OCI-LY7 (cell line): ENCODE measurements at regions of chr7 and their contacts with region 1.

Region 1: DNA sequence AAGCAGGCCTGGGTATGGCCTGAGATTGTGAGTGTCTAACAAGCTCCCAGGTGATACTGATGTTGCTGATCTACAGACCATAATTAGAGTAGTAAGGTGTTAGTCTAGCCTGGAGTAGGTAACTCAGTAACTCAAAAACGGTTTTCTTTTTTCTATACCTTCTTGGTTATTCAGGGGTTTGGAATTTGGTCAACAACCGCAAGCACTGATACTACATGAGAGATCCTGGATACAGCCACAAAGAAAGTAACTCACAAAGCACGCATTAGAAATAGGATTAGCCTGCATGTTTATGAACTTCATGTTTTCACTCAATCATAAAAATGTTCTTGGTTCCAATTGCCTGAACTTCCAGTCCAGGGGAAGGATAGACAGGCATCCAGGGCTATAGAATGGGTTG is 803.5 kb downstream of the MAGI2 start:
- DNase-seq: no peak
- H3K4me3 ChIP-seq: no peak overlapping the region
- H3K27ac ChIP-seq: no peak overlapping the region
- H3K4me1 ChIP-seq: no peaks in the 10 kb centered on the region
- CTCF ChIP-seq: no peak

Region 2: DNA sequence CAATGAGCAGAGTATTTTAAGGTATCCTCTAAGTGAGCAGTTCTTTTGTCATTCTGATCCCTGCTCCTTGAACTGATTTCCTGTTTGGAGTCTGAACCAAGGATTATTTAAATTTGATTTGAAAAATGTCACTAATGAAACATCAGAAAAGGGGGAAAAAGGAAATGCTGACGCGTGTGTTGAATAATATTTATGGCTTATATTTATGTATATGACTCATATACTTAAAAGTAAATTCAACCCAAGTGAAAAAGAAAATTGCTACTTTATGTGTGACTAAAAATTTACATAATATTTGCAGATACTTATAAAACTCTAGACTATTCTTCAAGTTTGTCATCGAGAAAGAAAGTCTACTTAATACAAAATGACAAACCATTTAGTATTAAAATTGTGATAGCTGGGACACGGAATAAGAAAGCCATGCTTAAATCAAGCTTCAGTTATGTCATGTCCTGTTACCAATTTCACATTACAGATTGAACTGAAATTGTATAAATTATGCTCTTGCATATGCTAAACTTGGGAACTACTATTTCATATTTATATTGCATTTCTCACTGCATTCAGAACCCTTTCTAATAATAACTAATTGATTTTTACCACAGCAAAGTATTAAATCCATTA is 153.6 kb after region 1 on chr7:
- CTCF ChIA-PET with region 1: no interaction called
- POLR2A ChIA-PET with region 1: interaction called, 10 read pairs
- intact Hi-C with region 1: no loop called
- DNase-seq: no peak
- H3K4me3 ChIP-seq: no peak overlapping the region
- H3K27ac ChIP-seq: no peak overlapping the region
- H3K4me1 ChIP-seq: no peaks in the 10 kb centered on the region
- CTCF ChIP-seq: no peak